ENCODE measurements at regions of chr20 and their contacts with region 1.

Region 1: GRCh38 chr20:8756410-8756809 is 312.5 kb upstream of the PLCB4 start:
- DNase-seq: peak; percentile 72
- H3K4me3 ChIP-seq: no peak overlapping the region
- H3K27ac ChIP-seq: peak overlapping the region; percentile 50 to 68 (median 56)
- H3K4me1 ChIP-seq: peaks cover 0 to 18% (median 14%) of the 10 kb centered on the region in 4 donors
- H3K27me3 ChIP-seq: no peaks in the 10 kb centered on the region
- CTCF ChIP-seq: no peak
- EP300 ChIP-seq: no peak
- POLR2A ChIP-seq: no peak

Region 2: DNA sequence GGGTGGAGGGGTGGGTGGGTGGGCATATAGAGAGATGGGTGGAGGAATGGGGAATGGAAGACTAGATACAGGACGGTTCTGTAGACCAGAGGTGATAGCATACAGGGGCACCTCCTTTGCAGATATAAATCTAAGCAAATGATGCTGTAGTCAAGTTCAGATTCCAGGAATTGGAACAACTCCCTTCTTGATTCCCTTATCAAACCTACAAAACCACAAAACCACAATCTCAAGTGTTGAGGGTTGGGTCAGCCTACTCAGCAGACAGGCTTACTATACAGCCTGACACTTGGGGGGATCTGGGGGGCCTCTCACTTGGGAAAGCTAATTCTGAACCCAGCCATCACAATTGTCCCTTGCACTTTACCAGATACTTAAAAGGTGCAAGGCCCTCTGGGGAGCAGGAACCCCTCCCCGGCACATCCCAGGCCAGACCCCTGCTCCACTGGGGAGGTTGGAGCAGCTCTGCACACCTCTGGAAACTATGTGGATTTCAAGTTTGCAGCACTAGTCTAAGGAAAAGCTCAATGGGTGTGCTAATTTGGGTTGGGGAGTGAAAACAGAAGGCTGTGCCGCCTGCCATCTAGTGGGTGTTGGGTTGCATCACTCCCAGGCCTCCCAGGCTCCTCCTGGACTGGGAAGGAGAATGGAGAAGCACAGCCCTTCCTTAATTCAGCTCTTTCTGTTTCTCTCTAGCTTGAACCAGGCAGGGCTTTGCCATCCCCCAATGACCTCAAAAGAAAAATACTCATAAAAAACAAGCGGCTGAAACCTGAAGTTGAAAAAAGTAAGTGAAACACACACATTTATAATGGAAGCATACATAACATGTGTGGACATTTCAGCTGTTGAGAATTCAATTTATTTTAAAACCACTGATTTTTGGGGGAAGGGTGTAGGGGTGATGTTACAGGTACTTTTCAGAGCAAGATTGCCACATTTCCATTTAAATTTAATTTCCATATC is 636.8 kb after region 1 on chr20:
- intact Hi-C with region 1: loop called (anchors 10 kb)
- DNase-seq: peak; percentile 82
- H3K4me3 ChIP-seq: no peak overlapping the region
- H3K27ac ChIP-seq: no peak overlapping the region
- H3K4me1 ChIP-seq: no peaks in the 10 kb centered on the region
- H3K27me3 ChIP-seq: no peaks in the 10 kb centered on the region
- CTCF ChIP-seq: peak; percentile 43 to 65 (median 45)
- EP300 ChIP-seq: no peak
- POLR2A ChIP-seq: no peak

Measured in sigmoid colon (tissue), 7 donors.